Heart left ventricle (tissue), 16 donors: ENCODE measurements at regions of chr7 and their contacts with region 1.

Region 1: GRCh38 chr7:147570390-147570789 is 1020.2 kb upstream of the C7orf33 start:
- DNase-seq: no peak
- ATAC-seq: no peak
- H3K4me3 ChIP-seq: no peak overlapping the region
- H3K27ac ChIP-seq: no peak overlapping the region
- H3K4me1 ChIP-seq: no peaks in the 10 kb centered on the region
- H3K27me3 ChIP-seq: no peaks in the 10 kb centered on the region
- CTCF ChIP-seq: no peak
- POLR2A ChIP-seq: no peak

Region 2: DNA sequence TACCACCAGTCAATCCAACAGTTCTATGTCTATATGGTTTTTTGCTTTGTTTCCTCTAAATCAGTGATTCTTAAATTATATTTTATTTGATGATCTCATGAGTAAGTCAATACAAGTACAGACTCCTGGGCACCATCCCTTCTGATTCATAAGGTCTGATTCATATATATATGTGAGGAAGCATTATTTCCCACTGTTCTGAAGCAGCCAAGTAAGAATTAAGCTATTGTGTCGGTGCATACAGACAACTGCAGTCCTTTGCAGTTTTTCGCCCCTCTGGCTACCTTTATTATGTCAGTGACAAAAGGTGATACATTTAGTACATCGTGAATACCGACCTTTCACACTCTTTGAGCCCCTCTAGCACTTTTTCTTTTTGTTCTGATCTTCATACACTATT is 59.5 kb before region 1 on chr7:
- intact Hi-C with region 1: loop called in 1 of 10 experiments (anchors 10 kb)
- DNase-seq: no peak
- ATAC-seq: no peak
- H3K4me3 ChIP-seq: no peak overlapping the region
- H3K27ac ChIP-seq: no peak overlapping the region
- H3K4me1 ChIP-seq: no peaks in the 10 kb centered on the region
- H3K27me3 ChIP-seq: no peaks in the 10 kb centered on the region
- CTCF ChIP-seq: no peak
- POLR2A ChIP-seq: no peak

Region 3: DNA sequence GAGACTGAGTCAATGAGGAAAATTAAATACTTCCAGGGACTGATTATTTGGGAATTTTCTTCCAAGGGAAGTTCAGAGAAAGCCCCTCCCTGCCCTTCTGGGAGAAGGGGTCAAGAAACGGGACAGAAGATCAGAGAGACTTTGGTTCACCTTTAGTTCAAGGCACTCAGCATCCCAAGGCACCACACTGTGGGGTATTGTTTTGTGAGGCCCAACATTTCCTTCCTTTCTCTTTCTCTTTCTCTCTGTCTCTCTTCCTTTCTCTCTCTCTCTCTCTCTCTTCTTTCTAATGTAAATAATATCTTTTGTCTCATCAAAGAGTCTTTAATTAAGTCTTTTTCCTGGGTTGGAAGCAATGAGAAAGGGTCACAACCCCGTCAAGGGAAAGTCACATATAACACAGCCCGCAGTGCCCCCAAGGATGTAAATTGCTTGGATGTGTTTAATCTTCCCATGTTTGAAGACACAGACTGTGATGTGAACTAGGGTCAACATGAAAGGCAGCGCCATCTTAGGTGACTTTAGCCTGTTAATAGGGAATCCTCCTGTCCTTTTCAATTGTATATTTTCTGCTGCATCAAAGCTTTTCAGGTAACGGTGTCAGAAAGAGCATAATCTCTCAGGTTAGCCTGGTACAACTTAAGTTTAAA is 36.9 kb after region 1 on chr7:
- intact Hi-C with region 1: no loop called
- DNase-seq: no peak
- ATAC-seq: no peak
- H3K4me3 ChIP-seq: no peak overlapping the region
- H3K27ac ChIP-seq: no peak overlapping the region
- H3K4me1 ChIP-seq: no peaks in the 10 kb centered on the region
- H3K27me3 ChIP-seq: no peaks in the 10 kb centered on the region
- CTCF ChIP-seq: no peak
- POLR2A ChIP-seq: no peak

Region 4: DNA sequence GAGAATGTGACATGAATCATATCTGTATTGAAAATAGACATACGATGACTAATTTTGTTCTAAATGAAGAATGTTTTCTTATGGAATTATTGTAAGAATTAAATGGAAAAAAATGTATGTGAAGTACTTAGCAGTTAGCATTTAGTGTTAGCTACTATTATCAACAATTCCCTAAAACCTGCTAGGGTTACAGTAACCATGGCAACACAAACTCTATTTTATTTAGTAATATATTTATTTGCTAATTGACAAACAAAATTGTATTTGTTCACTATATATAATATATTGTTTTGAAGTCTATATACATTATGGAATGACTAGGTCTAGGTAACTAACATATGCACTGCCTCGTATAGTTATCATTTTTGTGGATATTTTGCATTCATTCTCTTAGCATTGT is 105.8 kb after region 1 on chr7:
- intact Hi-C with region 1: no loop called
- DNase-seq: no peak
- ATAC-seq: no peak
- H3K4me3 ChIP-seq: no peak overlapping the region
- H3K27ac ChIP-seq: no peak overlapping the region
- H3K4me1 ChIP-seq: no peaks in the 10 kb centered on the region
- H3K27me3 ChIP-seq: peaks cover 0 to 3% (median 0%) of the 10 kb centered on the region in 9 donors
- CTCF ChIP-seq: no peak
- POLR2A ChIP-seq: no peak

Region 5: DNA sequence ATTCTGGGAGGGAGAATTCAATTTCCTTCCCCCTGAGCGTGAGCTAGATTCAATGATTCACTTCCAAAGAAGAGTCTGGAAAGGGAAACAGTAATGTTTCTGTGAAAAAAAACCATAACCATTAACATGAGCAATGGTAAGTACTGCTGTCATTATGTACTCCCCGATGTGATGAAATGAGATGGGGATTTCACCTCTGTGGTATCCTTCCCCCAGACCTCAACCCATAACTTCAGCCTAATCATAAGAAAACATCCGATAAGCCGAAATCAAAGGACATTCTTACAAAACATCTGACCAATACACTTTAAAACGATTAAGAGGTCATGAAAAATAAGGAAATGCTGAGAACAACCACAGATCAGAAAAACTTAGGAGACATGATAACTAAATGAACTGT is 1286.5 kb after region 1 on chr7:
- intact Hi-C with region 1: no loop called
- DNase-seq: no peak
- ATAC-seq: no peak
- H3K4me3 ChIP-seq: no peak overlapping the region
- H3K27ac ChIP-seq: no peak overlapping the region
- H3K4me1 ChIP-seq: peaks cover 0 to 9% (median 0%) of the 10 kb centered on the region in 12 donors
- H3K27me3 ChIP-seq: no peaks in the 10 kb centered on the region
- CTCF ChIP-seq: no peak
- POLR2A ChIP-seq: no peak